HEK293 (cell line): ENCODE measurements at regions of chr7 and their contacts with region 1.

Region 1: DNA sequence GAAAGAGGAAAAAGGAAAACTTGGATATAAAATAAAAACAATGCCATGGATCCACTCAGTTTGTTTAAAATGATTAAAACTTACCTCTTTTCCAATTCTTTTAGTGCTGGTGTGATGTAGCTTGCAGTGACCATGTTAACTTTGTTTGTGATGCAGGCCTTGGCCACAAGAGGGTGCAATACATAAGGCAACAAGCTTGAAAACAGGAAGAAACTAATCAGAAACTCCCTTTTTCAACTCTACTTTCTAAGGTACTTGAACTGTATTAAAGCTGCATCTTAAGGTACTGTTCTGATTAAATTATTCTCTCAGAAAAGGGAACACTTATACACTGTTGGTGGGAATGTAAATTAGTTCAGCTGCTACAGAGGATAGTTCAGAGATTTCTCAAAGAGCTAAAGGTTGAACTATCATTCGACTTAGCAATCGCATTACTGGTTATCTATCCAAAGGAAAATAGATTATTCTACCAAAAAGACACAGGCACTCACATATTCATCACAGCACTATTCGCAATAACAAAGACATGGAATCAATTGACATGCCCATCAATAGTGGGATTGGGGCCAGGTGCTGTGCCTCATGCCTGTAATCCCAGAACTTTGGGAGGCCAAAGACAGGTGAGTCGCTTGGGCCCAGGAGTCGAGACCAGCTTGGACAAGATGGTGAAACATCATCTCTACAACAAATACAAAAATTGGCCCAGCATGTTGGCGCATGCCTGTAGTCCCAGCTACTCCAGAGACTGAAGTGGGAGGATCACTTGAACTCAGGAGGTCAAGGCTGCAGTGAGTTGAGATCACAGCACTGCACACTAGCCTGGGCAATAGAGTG is 50.9 kb downstream of the AASS start:
- H3K4me3 ChIP-seq: no peak overlapping the region
- H3K27ac ChIP-seq: no peak overlapping the region
- H3K4me1 ChIP-seq: no peaks in the 10 kb centered on the region
- CTCF ChIP-seq: no peak; the same call in 1 of the 2 replicates

Region 2: DNA sequence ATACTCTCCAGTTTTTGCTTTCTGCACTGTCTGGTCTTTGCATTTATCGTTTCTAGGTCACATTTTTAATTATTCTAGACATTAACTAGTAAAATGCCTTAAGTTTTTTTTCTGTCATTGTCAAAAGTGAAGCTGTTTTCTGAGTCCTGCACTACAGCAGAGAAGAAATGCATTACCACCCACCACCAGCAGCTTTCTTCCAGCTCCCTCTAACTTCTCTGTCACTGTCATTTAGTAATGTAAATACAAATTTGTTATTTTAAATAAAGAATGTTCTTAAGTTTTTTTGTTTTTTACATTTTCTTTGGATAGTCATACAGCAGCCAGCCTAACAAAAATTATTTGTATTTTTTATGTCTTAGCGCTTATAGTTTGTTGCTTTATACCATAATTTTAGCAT is 201.4 kb before region 1 on chr7:
- CTCF ChIA-PET with region 1: no interaction called
- POLR2A ChIA-PET with region 1: no interaction called
- H3K4me3 ChIP-seq: no peak overlapping the region
- H3K27ac ChIP-seq: no peak overlapping the region
- H3K4me1 ChIP-seq: no peaks in the 10 kb centered on the region
- CTCF ChIP-seq: no peak

Region 3: GRCh38 chr7:122082670-122083069 is 10.5 kb before region 1 on chr7:
- CTCF ChIA-PET with region 1: interaction called, 23 read pairs
- POLR2A ChIA-PET with region 1: no interaction called
- H3K4me3 ChIP-seq: no peak overlapping the region
- H3K27ac ChIP-seq: no peak overlapping the region
- H3K4me1 ChIP-seq: no peaks in the 10 kb centered on the region
- CTCF ChIP-seq: no peak

Region 4: GRCh38 chr7:122132341-122132740 is 39.2 kb after region 1 on chr7:
- CTCF ChIA-PET with region 1: interaction called, 10 read pairs
- POLR2A ChIA-PET with region 1: no interaction called
- H3K4me3 ChIP-seq: no peak overlapping the region
- H3K27ac ChIP-seq: no peak overlapping the region
- H3K4me1 ChIP-seq: peaks cover 6% of the 10 kb centered on the region
- CTCF ChIP-seq: no peak

Region 5: GRCh38 chr7:122363144-122363543 is 270.0 kb after region 1 on chr7:
- CTCF ChIA-PET with region 1: no interaction called
- POLR2A ChIA-PET with region 1: no interaction called
- H3K4me3 ChIP-seq: no peak overlapping the region
- H3K27ac ChIP-seq: no peak overlapping the region
- H3K4me1 ChIP-seq: no peaks in the 10 kb centered on the region
- CTCF ChIP-seq: no peak

Region 6: DNA sequence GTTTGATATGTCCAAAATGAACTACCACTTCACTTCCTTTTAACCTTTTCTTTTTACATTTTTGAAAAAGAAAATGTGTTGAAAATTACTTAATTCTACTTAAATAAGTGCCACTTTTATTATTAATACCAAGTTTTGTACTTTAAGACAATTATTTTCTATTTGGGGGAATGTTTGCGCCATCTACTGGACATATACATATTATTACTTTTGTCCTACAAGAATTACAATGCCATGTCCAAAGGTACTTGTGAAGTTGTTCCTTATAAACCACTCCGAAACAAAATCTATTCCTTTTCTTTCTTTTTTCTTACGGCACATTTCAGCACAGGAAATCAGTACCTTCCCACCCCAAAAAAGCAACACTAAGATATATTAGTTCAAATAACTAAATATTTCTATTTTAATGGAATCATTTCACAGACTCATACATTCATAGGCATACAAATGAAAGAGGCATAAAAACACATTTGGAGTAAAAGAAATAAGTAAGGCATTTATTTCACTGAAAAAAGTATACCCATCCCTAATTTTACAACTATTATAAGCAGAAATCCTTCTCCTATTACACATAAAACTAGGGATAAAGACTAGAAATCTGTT is 435.8 kb after region 1 on chr7:
- CTCF ChIA-PET with region 1: interaction called, 12 read pairs
- POLR2A ChIA-PET with region 1: no interaction called
- H3K4me3 ChIP-seq: no peak overlapping the region
- H3K27ac ChIP-seq: no peak overlapping the region
- H3K4me1 ChIP-seq: no peaks in the 10 kb centered on the region
- CTCF ChIP-seq: no peak